PC-9 (cell line): ENCODE measurements at regions of chr12 and their contacts with region 1.

Region 1: DNA sequence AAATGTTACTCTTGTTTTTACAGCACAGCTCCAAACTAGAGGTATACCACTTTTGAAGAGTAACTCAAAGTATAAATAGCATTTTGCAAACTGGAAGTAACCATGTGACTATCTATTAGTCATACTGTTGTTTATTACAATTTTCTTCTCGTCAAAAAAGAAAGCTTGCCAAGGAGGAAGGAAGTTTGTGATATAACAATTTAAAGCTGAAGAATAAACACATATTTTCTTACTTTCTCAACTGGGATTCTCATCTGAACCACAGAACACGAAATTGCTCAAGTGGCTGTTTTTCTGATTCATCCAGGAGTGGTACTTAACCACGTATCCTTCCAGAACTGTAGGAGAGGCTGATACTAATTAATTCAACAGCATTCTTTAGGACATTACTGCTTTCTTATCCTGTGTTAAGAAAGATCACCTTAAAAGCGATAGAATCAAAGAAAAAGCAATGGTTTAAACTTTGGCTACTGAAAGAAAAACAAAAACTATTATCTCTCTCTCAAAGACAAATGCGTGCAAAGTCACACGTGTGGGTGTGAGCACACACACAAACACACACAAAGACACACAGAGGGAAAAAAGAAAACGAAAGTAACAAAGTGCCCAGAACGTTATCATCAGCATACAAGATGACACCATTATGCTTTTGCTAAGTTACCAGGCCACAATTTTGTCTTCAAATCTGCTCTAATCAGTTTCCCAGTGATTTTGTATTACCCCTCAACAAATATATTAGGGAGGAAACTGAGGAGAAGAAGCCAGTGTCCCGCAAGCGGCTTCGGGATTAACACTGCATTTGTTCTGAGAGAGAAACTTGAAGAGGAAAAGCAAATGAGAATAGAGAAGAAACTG is at the start of gene CLEC2B:
- DNase-seq: peak; percentile 18 to 83
- H3K4me3 ChIP-seq: peak within 1 kb of the TSS; percentile 68
- H3K27ac ChIP-seq: peak within 1 kb of the TSS; percentile 63
- H3K4me1 ChIP-seq: peaks cover 17% of the 10 kb centered on the region
- H3K27me3 ChIP-seq: no peaks in the 10 kb centered on the region
- CTCF ChIP-seq: no peak
- total RNA-seq, gene CLEC2B: 3.4 and 3.9 TPM in 2 replicates

Region 2: DNA sequence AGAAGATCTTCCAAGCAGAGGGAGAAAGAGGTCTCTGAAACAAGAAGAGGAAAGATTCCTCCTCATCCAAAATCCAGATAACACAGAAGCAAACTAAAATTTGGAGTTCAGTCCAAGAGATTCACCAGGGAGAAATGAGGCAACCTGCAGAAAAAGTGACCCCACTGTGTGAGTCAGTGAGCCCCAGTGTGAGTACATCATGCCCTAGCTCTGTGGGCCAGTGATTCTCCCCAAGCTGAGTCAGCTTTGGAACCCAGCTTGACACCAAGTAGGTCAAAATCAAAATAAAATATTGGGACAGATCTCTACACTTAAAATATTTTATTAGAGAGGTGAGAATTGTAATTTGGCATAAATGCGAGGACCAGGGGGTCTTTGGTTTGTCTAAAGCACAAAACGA is 17.6 kb before region 1 on chr12:
- CTCF ChIA-PET with region 1: no interaction called
- POLR2A ChIA-PET with region 1: no interaction called
- intact Hi-C with region 1: no loop called
- DNase-seq: no peak
- H3K4me3 ChIP-seq: no peak overlapping the region
- H3K27ac ChIP-seq: no peak overlapping the region
- H3K4me1 ChIP-seq: no peaks in the 10 kb centered on the region
- H3K27me3 ChIP-seq: no peaks in the 10 kb centered on the region
- CTCF ChIP-seq: no peak

Region 3: GRCh38 chr12:9925708-9926393 is 56.3 kb after region 1 on chr12:
- CTCF ChIA-PET with region 1: no interaction called
- POLR2A ChIA-PET with region 1: interaction called, 10 read pairs
- intact Hi-C with region 1: no loop called
- DNase-seq: peak in 1 of 2 experiments; percentile 6
- H3K4me3 ChIP-seq: 0 out of 2 replicates have a peak overlapping the region, but pooled peaks have one; percentile 9
- H3K27ac ChIP-seq: no peak overlapping the region
- H3K4me1 ChIP-seq: no peaks in the 10 kb centered on the region
- H3K27me3 ChIP-seq: no peaks in the 10 kb centered on the region
- CTCF ChIP-seq: peak; percentile 70